Esophagus squamous epithelium (tissue), 5 donors: ENCODE measurements at regions of chr5 and their contacts with region 1.

Region 1: GRCh38 chr5:34474573-34475021 is 181.5 kb upstream of the RAI14 start:
- DNase-seq: no peak
- H3K4me3 ChIP-seq: no peak overlapping the region
- H3K27ac ChIP-seq: no peak overlapping the region
- H3K4me1 ChIP-seq: peaks cover 0 to 6% (median 0%) of the 10 kb centered on the region in 3 donors
- H3K27me3 ChIP-seq: peaks cover 0 to 17% (median 0%) of the 10 kb centered on the region in 4 donors
- CTCF ChIP-seq: peak; percentile 81 to 98 (median 90)
- POLR2A ChIP-seq: no peak

Region 2: DNA sequence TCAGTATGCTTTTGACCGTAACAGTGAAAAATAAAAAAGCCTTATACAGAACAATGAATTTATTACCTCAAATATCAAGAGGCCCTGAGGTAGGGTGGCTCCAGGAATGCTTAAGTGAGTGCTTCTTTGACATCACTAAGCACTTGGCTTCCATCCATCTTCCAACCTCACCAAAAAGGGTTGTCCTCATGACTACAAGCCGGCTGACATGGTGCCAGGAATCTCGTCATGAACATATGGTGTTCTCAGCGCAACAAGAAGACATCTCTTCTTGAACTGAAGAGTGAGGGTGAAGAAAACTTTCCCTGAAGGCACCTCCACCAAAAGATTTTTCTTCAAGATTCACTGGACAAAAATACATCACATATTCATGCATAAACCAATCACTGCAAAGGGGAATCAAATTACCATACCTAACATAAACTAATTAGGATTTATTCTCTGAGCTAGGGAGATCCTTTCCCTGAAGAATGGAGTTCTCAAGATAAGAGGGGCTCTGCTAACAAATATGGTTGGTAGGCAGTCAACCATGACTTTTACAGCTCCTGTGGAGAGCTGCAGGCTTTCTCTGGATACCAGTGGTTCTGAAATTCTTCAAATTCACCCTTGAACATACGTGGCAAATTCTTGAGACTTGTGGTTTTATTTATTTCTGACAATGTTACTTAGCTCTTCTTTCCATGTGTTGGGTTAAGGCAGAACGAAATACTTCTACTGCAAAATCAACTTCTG is 523.6 kb after region 1 on chr5:
- intact Hi-C with region 1: loop called (anchors 5 kb)
- DNase-seq: no peak
- H3K4me3 ChIP-seq: no peak overlapping the region
- H3K27ac ChIP-seq: no peak overlapping the region
- H3K4me1 ChIP-seq: no peaks in the 10 kb centered on the region
- H3K27me3 ChIP-seq: peaks cover 0 to 15% (median 0%) of the 10 kb centered on the region in 4 donors
- CTCF ChIP-seq: no peak
- POLR2A ChIP-seq: no peak